AG04449 (cell line): ENCODE measurements at regions of chr9 and their contacts with region 1.

Region 1: DNA sequence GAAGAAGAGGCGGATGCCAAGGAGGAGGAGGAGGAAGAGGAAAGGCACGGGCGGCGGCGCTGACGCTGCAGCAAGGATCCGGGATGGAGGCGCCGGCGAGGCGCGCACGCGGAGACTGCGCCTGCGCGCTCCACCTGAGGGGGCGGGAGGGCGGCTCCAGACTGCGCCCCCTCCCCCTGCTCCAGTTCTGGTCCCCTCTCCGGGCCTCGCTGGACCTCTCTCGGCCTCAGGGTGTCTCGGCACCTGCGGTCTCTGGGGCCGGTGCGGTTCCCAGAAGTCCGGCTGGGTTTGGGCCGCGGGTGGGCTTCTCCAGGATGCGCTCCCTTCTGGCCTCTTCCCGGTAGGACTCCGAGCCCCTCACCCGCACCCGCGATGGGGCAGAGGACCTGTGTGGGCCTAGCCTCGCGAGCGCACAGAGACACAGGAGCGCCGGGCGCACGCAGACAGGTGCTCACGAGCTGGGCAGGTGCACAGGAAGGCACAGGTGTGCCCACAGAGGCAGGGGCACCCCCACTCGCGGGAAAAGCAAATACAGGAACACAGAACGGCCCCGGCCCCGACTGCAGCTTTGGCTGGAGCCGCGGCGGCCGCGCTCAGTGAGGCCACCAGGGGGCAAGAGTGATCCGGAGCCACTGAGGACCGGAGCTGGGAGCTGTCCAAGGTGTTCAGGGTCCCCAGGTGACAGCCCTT is at the start of gene NPDC1:
- DNase-seq: no peak
- H3K4me3 ChIP-seq: peak within 1 kb of the TSS; percentile 65
- CTCF ChIP-seq: peak; percentile 93

Region 2: DNA sequence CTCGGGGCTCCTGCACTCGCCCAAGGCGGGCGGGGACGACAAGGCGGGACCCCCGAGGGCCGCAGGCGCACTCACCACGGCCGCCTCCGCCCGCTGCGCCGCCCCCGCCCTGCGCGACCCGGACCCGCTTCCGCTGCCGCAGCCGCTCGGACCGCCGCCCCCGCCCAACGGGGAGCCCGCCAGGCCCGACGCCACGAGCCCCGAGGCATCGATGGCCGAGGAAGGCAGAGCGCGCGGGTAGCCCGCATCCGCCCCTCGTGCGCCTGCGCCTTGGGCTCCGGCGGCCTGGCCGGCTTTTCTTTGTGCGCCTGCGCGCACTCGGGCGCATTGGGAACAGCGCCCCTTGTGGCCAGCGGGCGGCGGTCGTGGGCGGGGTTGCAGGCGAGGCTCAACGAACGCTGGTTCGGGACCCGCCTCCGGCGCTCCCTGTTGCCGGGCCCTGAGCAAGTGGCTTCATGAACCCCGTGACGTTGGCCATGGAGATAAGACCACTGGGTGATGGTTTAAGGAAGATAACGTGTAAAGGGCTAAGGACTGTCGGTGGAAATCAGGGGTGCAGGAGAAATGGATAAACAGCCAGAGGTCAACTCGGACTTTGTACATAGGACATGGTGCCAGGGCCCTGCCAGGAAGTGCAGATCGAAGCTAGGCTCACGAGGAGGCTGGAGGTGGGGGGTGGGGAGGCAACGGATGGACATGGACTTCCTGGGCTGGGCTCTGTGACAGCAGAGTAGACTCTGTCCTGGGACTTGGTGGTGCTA is 101.5 kb before region 1 on chr9 and contains the starts of genes C8G and FBXW5:
- CTCF ChIA-PET with region 1: interaction called, 10 read pairs
- POLR2A ChIA-PET with region 1: no interaction called
- DNase-seq: peak; percentile 14
- H3K4me3 ChIP-seq: peak within 1 kb of the TSS; percentile 81
- CTCF ChIP-seq: peak; percentile 96

Region 3: DNA sequence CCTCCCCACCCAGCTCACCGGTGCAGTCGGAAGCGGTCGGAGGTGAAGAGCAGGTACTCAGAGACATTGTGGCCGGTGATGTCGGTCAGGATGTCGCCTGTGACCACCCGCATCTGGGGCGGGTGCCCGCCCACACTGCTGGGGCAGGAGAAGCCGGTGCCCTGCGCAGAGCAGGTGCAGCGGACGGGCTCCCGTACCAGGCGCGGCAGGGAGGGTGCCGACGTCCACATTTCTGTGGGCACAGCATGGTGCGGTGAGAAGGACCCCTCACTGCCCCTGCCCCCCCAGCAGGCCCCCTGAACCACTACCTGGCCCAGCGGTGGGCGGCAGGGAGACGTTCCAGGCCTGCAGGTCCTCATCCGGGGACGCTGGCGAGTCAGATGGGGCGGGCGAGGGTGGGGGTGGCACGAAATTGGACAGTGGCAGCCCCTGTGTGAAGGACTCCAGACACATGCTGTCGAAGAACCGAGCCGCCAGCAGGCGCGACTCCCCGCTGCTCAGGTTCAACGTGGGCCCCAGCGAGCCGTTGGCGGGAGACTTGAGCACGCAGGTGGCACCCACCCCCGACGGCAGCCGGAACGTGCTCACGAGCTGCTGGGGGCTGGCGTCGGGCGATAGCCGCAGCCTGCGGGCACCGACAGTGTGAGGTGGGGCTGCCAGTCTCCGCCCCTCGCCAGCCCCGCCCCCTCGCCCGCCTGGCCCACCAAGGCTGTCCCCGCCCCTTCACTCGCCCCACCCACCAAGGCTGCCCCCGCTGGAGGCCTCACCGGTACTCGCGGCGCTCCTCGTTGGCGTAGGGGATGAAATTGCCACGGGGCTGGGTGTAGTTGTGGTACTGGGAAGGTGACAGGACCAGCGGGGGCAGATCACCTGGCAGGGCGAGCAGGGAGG is 33.3 kb before region 1 on chr9:
- CTCF ChIA-PET with region 1: no interaction called
- POLR2A ChIA-PET with region 1: no interaction called
- DNase-seq: no peak
- H3K4me3 ChIP-seq: no peak overlapping the region
- CTCF ChIP-seq: no peak

Region 4: DNA sequence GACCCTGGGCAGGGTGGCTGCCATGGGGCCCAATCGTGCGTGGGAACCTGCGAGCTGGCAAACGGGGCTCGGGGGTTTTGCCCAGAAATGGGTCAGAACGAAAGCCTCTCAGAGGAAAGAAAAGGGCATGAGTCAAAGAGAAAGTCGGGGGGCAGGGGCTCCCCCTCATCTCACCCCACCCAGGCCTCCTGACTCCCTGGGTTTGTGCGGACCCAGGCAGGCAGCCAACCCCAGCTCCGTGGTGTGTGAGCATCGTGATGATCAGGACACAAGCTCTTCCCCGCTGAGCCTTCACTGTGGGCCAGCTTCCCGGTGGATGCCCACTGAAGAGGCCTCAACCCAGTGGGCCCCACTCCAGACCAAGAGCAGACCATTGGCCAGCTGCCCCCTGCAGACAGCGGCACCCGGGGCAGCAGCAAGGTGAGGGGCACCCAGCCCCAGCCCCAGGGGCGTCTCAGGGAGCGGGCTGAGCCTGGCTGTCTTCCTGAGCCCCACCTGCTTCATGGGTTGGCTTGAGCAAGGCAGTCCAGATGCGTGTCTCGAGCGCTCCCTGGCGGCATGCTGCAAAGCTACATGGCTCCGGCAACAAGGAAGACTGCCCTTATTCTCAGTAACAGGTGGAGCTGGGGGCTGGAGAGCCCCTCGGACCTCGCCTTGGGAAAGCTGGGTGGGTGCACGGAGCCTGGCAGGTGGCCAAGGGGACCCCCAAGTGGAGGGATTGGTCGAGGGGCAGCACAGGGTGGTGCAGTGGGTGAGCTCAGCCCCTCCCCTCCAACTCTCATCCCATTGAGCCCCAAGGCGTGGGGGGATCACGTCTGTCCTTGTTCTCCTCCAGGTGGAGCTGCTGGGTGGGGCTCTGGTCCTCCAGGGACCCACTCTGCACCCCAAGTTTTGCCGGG is 11.1 kb before region 1 on chr9:
- CTCF ChIA-PET with region 1: interaction called, 39 read pairs
- POLR2A ChIA-PET with region 1: interaction called, 3 read pairs
- DNase-seq: peak; percentile 31
- H3K4me3 ChIP-seq: no peak overlapping the region
- CTCF ChIP-seq: peak; percentile 96

Region 5: GRCh38 chr9:137077010-137077747 is 30.9 kb after region 1 on chr9 and contains the start of gene UAP1L1:
- CTCF ChIA-PET with region 1: interaction called, 364 read pairs
- POLR2A ChIA-PET with region 1: no interaction called
- DNase-seq: no peak
- H3K4me3 ChIP-seq: peak within 1 kb of the TSS; percentile 68
- CTCF ChIP-seq: no peak

Region 6: DNA sequence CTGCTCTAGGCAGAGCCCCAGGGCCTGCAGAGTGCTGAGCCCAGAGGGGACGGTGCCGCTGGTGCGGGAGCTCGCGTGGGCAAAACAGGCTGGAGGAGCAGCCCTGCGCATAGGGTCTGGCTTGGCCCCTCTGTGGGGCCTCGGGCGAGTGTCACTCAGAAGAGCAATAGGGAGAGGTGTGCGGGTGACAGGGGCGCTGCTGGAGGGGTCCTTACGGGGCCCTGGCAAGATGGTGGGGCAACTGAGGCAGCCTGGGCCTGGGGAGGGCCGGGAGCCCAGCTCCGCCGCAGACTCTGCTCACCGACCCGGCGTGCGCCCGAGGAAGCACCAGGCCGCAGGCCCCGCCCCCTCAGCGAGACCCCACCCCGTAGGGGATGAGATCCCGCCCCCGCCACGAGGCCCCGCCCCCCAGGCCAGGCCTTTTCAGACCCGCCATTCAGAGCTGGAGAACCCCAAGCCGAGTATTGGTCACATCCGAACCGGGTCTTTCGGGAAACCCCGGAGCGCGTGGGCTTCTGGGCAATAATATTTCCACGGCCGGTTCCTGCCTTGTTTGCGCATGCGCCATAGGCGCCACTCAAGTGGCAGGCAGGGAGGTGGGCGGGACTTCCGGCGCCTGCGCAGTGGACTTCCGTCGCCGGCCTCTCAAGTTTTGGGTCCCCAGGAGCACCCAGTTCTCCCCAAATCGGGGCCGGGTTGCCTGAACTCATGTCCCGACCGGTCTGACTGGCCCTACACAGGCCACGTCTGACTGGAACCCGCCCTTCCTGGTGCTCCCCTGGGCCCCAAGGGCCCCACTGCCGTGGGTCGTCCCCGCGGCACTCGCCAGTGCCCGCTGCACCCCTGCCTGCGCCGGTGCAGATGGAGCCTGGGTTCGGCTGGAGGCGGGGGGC is 177.1 kb after region 1 on chr9:
- CTCF ChIA-PET with region 1: interaction called, 20 read pairs
- POLR2A ChIA-PET with region 1: interaction called, 3 read pairs
- DNase-seq: peak; percentile 80
- H3K4me3 ChIP-seq: peak overlapping the region; percentile 87
- CTCF ChIP-seq: no peak